Right cardiac atrium (tissue), 5 donors: ENCODE measurements at regions of chr6 and their contacts with region 1.

Region 1: GRCh38 chr6:19851241-19852089 is 14.3 kb downstream of the ID4 start:
- DNase-seq: no peak
- ATAC-seq: peak; percentile 92 to 93
- H3K4me3 ChIP-seq: peak overlapping the region; percentile 7
- H3K27ac ChIP-seq: peak overlapping the region; percentile 21
- H3K4me1 ChIP-seq: no peaks in the 10 kb centered on the region
- H3K27me3 ChIP-seq: no peaks in the 10 kb centered on the region

Region 2: DNA sequence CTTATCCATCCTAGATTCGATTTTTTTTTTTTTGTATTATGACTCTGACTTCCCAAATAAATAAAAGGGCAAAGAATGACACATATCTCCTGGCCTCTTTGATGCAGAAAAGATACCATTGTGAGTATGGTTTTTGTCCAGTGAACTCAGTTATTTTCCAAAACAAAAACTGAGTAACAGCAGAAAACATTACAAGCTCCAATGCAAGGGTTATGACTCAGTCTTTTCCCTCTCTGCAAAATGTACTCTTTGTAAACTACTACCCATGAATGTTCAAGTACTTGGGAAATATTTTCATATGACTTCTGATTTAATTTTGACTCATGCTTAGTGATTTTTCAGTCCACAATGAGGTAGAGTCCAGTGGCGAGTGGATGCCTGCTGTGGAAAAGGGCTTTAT is 1109.1 kb before region 1 on chr6:
- intact Hi-C with region 1: loop called in 1 of 4 experiments (anchors 10 kb)
- DNase-seq: no peak
- ATAC-seq: no peak
- H3K4me3 ChIP-seq: no peak overlapping the region
- H3K27ac ChIP-seq: no peak overlapping the region
- H3K4me1 ChIP-seq: no peaks in the 10 kb centered on the region
- H3K27me3 ChIP-seq: no peaks in the 10 kb centered on the region

Region 3: GRCh38 chr6:19024737-19025136 is 826.7 kb before region 1 on chr6:
- intact Hi-C with region 1: loop called in 1 of 4 experiments (anchors 10 kb)
- DNase-seq: no peak
- ATAC-seq: peak; percentile 58 to 80
- H3K4me3 ChIP-seq: no peak overlapping the region
- H3K27ac ChIP-seq: no peak overlapping the region
- H3K4me1 ChIP-seq: no peaks in the 10 kb centered on the region
- H3K27me3 ChIP-seq: no peaks in the 10 kb centered on the region

Region 4: DNA sequence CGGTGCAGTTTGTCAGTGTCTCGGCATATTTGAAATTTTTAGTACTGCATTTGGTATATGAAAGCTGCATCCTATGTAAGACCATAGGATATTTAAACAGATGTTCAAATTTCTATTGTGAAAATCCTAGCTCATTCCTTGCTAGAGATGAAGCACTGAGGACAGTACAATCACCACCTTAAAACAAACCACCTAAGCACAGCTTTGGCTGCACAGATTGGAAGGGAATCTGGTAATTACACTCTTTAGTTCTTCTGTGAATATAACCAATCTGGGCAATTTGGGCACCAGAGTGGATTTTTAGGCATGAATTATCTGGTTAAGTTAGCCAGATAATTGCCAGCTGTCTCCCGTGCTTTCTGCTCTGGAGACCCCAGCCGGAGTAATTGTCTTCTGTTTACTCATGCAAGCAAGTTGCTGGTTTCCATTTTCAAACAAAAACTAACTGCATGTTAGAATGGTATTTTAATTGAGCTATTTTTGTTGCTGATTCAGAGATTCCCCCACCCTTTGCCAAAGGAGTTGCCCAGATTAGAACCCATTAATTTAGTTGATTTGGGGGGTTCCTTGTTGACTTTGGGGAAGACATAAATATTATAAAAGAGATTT is 587.1 kb after region 1 on chr6:
- intact Hi-C with region 1: no loop called
- DNase-seq: no peak
- ATAC-seq: no peak
- H3K4me3 ChIP-seq: no peak overlapping the region
- H3K27ac ChIP-seq: no peak overlapping the region
- H3K4me1 ChIP-seq: peaks cover 3% of the 10 kb centered on the region
- H3K27me3 ChIP-seq: no peaks in the 10 kb centered on the region